ENCODE measurements at regions of chr2 and their contacts with region 1.

Region 1: DNA sequence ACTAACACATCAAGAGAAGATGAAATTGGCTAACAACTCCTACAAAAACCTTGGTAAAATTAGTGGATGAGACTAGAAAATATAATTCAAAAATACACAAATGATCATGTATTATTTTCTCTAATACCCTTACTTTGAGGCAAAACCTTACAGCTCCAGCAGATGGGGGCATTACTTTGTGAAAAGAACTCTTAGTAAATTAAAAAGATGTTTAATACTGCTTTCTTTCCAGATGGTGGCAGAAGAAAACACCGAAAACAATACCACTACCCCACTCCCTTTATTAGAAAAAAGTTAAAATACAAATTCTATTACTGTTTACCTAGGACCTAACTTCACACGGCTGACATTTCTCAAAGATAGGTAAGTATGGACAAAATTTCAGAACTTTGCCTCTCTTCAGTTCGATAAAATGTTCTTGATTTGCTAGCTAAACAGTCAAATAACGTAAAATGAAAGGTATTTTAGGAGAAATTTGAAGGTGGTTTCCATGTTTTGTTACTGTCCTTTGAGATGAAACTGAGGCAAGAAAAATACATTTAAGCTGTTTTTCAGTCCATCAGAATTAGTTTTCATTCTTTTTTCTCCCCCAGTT is 30.6 kb downstream of the ORC4 start:
- DNase-seq: peak; percentile 17
- H3K4me3 ChIP-seq: no peak overlapping the region
- CTCF ChIP-seq: peak; percentile 39

Region 2: GRCh38 chr2:147696448-147696847 is 293.5 kb before region 1 on chr2:
- CTCF ChIA-PET with region 1: no interaction called
- POLR2A ChIA-PET with region 1: no interaction called
- DNase-seq: no peak
- H3K4me3 ChIP-seq: no peak overlapping the region
- CTCF ChIP-seq: no peak

Region 3: DNA sequence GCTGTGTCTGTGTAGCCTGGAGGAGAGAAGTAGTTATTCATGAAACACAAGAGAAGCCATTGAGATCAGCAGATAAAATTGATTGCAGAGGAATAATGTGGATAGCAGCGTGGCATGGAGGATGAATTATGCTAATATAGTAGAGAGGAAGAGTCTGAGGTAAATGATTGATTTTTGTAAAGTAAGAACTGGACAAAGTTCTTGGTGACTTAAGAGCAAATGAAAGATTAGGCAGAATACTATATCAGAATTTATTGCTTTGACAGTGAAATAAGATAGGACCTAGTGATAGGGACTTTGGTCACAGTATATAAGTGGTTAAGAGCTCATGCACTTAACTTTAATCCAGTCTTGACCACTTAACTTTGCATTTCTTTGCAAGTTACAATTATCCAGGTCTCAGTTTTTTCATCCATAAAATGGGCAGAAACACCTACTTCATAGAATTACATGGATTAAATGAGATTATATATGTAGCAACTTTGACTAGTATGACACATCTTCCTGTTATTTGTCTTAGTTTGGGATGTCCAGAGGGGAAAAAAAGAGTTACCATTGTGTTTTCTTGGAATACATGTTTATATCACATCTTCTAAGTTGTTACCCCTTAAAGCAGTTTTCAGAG is 115.9 kb before region 1 on chr2:
- CTCF ChIA-PET with region 1: no interaction called
- POLR2A ChIA-PET with region 1: no interaction called
- DNase-seq: no peak
- H3K4me3 ChIP-seq: no peak overlapping the region
- CTCF ChIP-seq: no peak

Region 4: GRCh38 chr2:147910990-147911473 is 78.9 kb before region 1 on chr2:
- CTCF ChIA-PET with region 1: no interaction called
- POLR2A ChIA-PET with region 1: no interaction called
- DNase-seq: peak; percentile 16
- H3K4me3 ChIP-seq: no peak overlapping the region
- CTCF ChIP-seq: peak; percentile 20

Region 5: DNA sequence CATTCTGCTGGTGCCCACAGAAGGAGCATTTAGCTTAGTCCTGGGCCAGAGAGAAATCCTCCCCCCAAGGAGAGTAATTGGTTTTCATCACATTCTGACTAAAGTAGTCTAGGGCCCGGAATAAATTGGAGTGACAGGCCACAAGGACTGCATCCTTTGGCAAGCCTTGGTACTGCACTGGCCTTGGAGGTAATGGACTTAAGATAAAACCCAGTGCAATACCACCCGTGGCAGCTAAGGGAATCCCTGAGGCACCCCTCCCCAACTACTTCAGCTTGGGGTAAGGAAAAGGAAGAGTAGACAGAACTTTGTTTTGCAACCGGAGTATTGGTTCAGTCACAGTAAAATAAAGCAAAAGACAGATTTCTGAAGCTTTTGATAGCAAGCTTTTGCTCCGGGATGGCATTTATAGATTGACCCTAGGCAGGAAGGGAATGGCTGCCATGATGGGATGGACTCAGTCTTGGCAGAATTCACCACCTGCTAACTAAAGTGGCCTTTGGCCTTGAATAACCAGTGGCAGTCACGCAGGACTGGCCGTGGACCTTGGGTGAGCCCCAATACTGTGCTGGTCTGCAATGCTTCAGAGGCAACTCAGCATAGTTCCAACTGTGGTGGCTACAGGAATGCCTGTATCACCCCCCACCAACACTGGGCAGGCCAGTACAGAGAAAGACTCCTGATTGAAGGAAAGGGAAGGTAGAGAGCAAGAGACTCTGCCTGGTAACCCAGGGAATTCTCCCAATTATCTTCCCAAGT is 16.5 kb after region 1 on chr2:
- CTCF ChIA-PET with region 1: interaction called, 14 read pairs
- POLR2A ChIA-PET with region 1: no interaction called
- DNase-seq: no peak
- H3K4me3 ChIP-seq: no peak overlapping the region
- CTCF ChIP-seq: no peak

Region 6: GRCh38 chr2:148201075-148202004 is 211.4 kb after region 1 on chr2:
- CTCF ChIA-PET with region 1: interaction called, 50 read pairs
- POLR2A ChIA-PET with region 1: interaction called, 5 read pairs
- DNase-seq: no peak
- H3K4me3 ChIP-seq: no peak overlapping the region
- CTCF ChIP-seq: peak; percentile 49

Measured in AG04449 (cell line).